Dendritic cell treated with granulocyte-macrophage colony-stimulating factor and Interleukin-4, amounts not matched to agents 40 ng/mL and 50 ng/mL, for 4 days (primary cell): ENCODE measurements at regions of chr1 and their contacts with region 1.

Region 1: DNA sequence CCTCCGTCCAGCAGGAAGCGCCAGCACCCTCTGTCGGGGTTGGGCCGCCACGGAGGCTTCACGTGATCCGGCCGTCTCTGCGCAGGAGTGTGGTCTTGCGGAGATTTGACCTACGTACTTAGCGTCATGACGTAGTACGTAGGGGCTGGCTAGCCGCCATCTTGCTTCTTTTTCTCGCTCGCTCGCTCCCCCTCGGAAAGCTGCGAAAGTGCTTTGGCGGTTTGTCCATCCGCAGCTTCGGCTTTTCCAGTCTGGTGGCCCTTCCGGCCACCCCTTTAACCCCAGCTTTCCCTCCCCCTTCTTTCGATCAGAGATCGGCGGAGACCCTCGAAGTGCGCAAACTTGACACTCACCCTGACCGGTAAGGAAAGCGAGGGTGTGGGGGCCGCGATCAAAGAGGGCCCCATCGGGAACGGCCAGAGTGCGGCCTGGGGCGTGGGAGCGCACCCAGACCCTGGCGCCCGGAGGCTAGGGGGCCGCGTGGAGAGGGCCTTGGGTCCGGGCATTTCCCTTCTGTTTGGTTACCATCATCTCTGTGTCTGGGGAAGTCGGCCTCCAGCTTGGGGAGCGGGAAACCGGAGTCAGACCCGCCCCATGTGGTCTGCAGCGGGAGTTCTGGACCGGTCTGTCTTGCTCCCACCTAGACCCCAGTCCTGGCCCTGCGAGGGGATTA is at the start of gene PRRC2C:
- H3K4me3 Mint-ChIP-seq: peak within 1 kb of the TSS; percentile 93
- H3K27ac Mint-ChIP-seq: peak within 1 kb of the TSS; percentile 96
- H3K4me1 Mint-ChIP-seq: peaks cover 32% of the 10 kb centered on the region
- H3K27me3 Mint-ChIP-seq: no peaks in the 10 kb centered on the region

Region 2: GRCh38 chr1:171313835-171314320 is 171.6 kb before region 1 on chr1 and contains the start of gene FMO4:
- intact Hi-C with region 1: loop called (anchors 1 kb)
- H3K4me3 Mint-ChIP-seq: peak within 1 kb of the TSS; percentile 67
- H3K27ac Mint-ChIP-seq: peak within 1 kb of the TSS; percentile 82
- H3K4me1 Mint-ChIP-seq: peaks cover 9% of the 10 kb centered on the region
- H3K27me3 Mint-ChIP-seq: no peaks in the 10 kb centered on the region

Region 3: GRCh38 chr1:171683870-171684269 is 198.4 kb after region 1 on chr1:
- intact Hi-C with region 1: no loop called
- H3K4me3 Mint-ChIP-seq: no peak overlapping the region
- H3K27ac Mint-ChIP-seq: no peak overlapping the region
- H3K4me1 Mint-ChIP-seq: peaks cover 5% of the 10 kb centered on the region
- H3K27me3 Mint-ChIP-seq: no peaks in the 10 kb centered on the region

Region 4: DNA sequence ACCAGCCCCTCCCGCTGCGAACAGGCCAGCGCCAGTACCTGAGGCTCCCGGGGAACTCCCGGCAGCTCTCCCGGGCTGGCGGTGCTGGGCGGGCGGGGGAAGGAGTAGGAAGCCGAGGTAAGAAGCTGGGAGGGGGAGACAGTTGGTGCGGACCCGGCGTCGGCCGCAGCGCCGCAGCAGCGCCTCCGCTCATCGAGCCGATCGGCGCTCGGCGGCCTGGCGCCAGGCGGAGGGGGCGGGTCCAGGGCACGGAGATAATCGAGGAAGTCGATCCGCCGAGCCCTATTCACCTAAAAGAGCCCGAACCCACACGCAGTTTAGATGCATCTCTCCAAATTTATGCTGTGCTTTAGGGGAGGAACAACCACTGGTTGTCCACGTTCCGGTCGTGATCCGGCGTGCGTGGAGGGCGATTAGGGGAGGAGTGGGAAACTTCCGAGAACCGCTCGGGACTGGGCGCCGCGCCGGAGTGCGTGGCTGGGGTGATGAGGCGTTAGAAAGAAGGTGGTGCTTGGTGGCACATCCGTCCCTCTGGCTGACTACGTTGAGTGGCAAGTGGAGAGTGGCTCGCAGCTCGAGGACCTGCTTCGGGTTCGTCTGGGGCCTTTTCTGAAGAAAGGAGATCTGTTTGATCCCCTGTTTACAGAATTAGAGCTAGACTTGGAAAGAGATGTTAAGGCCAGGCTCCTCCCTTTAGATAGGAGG is 256.5 kb after region 1 on chr1 and contains the start of gene VAMP4:
- intact Hi-C with region 1: loop called (anchors 5 kb)
- H3K4me3 Mint-ChIP-seq: peak within 1 kb of the TSS; percentile 98
- H3K27ac Mint-ChIP-seq: peak within 1 kb of the TSS; percentile 93
- H3K4me1 Mint-ChIP-seq: peaks cover 43% of the 10 kb centered on the region
- H3K27me3 Mint-ChIP-seq: no peaks in the 10 kb centered on the region